Colonic mucosa (tissue), 4 donors: ENCODE measurements at regions of chr1 and their contacts with region 1.

Region 1: DNA sequence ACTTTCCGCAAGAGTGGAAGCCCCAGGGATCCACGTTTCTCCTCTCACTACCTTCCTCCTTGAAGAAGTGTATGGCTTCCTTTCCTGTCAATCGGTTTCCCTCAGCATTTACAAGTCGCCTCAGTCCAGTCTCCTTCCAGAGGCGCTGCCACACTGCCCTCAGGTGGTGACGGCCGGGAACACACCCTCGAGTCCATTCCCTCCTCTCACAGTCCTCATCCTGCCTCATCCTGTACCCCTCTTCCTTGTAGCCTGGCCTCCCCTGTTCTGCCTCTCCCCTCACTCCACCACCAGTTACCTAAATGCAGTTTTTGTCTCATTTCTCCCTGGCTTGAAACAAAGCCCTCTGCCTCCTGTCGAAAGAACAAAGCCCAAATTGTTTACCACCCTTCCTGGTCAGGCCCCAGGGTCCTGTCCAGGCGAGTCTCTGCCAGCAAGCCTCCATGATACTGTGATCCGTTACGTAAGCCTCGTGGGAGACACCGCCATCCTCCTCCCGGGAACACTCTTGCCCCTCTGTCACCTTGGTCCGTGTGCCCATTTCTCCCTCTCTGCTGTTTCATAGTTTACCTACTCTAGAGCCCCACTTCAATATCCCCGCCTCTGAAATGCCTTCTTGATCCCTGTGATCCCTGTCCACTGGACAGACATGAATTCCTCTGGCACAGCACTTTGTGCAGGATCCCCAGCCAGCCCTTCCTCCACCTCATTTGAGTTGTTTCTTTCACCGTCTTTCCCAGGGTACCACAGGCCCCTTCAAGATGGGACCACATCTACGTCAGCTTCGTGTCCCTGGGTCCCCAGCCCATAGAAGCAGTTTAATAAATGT is 23.3 kb upstream of the LSM10 start:
- DNase-seq: peak; percentile 96
- H3K4me3 ChIP-seq: no peak overlapping the region
- H3K27ac ChIP-seq: no peak overlapping the region
- H3K4me1 ChIP-seq: no peaks in the 10 kb centered on the region
- H3K27me3 ChIP-seq: no peaks in the 10 kb centered on the region
- CTCF ChIP-seq: peak; percentile 95

Region 2: GRCh38 chr1:36099681-36100341 is 321.2 kb before region 1 on chr1:
- intact Hi-C with region 1: loop called (anchors 10 kb)
- DNase-seq: peak; percentile 82
- H3K4me3 ChIP-seq: no peak overlapping the region
- H3K27ac ChIP-seq: no peak overlapping the region
- H3K4me1 ChIP-seq: no peaks in the 10 kb centered on the region
- H3K27me3 ChIP-seq: no peaks in the 10 kb centered on the region
- CTCF ChIP-seq: peak; percentile 87

Region 3: DNA sequence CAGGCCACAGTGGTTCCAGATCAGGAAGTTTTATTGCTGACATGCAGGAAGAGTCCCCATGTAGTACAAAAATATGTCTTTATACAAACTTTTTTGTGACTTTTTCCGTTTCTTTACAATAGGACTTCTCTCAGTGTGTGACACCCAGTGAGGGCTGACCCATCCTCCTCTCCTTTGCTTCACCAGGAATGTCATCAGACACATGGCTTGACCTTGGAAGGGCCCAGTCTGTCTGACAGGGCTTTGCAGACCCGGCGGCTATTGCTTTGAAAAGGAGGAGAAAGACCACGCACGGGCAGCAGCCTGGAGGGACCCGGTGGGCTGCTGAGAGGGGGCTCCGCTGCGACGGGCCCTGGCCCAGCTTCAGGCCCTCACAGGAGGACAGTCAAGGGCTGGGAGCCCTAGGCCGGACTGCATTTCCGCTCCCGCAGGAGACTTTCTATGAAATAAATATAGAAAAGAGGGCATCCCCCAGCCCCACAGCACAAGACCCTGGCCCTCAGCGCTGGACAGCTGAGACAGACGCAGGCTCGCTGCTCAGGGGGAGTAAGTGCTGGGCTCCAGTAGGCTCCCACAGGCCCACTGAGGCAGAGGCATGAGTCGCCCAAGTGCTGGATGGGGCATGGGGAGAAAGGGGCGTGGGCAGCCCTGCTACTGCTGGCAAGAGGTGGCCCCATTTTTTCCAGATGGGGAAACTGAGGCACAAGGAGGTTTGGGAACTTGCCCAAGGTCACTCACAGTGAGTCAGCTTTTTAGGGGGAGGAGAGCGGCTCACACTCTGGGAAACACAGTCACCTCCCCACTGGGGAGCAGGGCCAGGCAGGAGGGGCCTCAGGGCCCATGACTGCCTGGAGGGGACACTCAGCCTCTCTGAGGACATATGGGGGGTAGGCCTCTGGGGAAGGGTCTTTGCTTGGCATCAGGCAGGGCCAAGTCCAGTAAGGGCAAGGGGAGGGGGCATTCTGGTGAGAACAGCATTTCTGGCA is 81.1 kb before region 1 on chr1:
- intact Hi-C with region 1: loop called (anchors 2 kb)
- DNase-seq: no peak
- H3K4me3 ChIP-seq: no peak overlapping the region
- H3K27ac ChIP-seq: no peak overlapping the region
- H3K4me1 ChIP-seq: no peaks in the 10 kb centered on the region
- H3K27me3 ChIP-seq: no peaks in the 10 kb centered on the region
- CTCF ChIP-seq: no peak

Region 4: DNA sequence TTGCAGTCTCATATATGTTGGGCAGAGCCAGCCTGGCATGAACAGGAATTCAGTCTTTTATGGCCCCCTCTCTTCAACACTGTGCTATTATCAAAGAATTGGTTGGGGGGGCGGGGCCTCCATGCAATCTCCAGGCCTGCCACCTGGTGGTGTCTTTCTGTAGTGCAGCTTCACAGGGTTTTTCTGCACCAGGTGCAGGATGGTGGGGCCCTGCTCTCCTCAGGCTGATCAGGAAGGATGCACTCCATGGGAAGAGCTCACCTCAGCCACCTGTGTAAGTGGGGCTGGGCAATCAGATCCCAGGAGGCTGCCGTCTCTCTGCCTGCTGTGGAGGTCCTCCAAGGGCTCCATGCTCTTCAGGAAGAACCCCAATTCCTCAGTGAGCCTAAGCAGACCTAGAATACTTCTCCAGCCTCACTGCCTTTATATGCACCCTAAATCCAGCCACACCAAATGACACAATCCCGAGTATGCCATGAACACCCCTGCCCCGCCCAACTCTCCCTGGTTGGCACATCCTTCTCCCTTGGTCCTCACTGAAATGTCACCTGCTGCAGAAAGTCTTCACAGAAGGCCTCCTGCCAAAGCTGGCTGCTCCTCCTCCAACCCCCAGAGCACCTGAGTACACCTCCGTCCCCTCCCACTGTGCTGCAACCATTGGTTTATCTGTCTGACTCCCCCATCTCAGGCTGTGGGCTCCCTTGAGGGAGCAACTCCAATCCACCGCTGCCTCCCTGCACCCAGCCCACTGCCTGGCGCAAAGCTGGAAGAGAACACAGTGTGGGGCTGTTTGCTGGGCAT is 51.8 kb before region 1 on chr1:
- intact Hi-C with region 1: loop called (anchors 2 kb)
- DNase-seq: peak; percentile 92
- H3K4me3 ChIP-seq: no peak overlapping the region
- H3K27ac ChIP-seq: peak overlapping the region; percentile 10
- H3K4me1 ChIP-seq: peaks cover 39% of the 10 kb centered on the region
- H3K27me3 ChIP-seq: no peaks in the 10 kb centered on the region
- CTCF ChIP-seq: peak; percentile 92

Region 5: GRCh38 chr1:36482710-36483393 is 61.8 kb after region 1 on chr1 and contains the start of gene CSF3R:
- intact Hi-C with region 1: no loop called
- DNase-seq: no peak
- H3K4me3 ChIP-seq: no peak within 1 kb of the TSS
- H3K27ac ChIP-seq: no peak within 1 kb of the TSS
- H3K4me1 ChIP-seq: no peaks in the 10 kb centered on the region
- H3K27me3 ChIP-seq: no peaks in the 10 kb centered on the region
- CTCF ChIP-seq: no peak
- total RNA-seq, gene CSF3R: 1.1 to 3.8 TPM